Activated naive CD8-positive, alpha-beta T cell treated with anti-CD3 and anti-CD28 coated beads, Interleukin-2, amount 10 ng/mL, durations not matched to agents 7 days and 5 days (primary cell): ENCODE measurements at regions of chr11 and their contacts with region 1.

Region 1: DNA sequence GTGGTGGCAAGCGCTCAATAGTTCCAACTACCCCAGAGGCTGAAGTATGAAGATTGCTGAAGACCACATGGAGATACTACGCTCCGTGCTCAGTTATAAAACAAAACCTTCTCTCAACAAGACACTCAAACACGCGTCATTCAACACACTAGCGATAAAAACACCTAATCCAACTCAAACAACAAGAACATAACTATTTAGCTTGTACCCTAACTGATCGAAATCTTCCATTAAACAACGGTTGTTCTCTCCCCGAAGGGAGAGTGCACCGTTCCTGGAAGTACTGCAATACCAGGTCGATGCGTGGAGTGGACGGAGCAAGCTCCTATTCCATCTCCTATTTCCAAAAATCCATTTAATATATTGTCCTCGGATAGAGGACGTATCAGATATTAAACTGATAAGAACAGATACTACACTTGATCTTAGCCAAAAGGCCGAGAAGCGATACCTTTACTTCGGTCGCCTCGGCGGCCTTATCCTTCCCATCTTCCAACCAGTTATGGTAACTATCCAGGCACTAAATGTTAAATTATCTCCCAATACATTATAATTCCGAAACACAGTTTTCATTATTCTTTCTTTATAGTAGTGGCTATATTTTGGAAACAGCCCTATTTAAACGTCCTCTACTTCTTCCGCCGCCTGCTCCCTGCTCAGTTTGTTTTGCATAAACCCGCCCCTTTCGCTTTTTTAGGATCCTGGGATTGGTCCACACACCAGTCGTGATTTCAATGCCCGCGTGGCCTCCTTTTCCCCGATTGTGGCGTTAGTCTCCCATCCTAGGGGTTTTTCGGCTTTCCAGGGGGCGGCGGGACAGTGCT is 2.2 kb upstream of the WDR74 start:
- DNase-seq: peak; percentile 81
- ATAC-seq: peak; percentile 69
- H3K4me3 Mint-ChIP-seq: no peak overlapping the region
- H3K27ac Mint-ChIP-seq: no peak overlapping the region
- H3K4me1 Mint-ChIP-seq: peaks cover 20% of the 10 kb centered on the region
- H3K27me3 Mint-ChIP-seq: no peaks in the 10 kb centered on the region

Region 2: DNA sequence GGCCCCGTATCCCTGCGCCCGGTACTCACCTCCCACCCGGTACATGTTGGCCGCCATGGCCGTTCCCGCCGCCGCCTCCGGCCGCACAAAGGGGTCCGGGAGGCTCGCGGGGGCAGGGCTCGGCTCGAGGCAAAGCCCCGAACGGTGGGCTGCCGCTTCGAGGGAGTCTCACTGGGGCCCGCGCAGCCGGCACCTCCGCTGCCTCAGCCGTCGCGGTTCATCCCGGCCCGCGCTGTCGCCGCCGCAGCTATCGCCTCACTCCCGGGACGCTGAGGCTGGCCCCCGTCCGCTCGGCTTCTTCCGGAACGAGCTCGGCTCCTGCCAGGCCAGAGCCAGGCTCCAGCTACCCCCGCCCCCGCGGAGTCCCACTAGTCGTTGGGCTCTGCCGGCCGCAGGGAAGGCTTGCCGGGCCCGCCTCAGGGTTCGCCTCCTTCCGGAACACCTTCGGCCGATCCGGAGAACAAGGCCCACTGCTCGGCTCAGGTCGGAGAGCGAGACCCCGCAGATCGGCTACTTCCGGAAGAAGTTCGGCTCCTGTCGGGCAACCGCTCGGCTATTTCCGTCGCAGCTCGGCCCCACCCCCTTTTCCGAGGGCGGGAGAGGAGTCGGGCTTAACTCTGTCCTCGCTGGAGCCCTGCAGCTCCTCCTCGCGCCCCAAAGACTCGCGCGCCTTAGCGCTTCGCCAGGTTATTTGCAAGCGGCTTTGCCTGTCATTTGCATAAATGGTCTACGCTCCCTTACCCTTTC is 240.0 kb before region 1 on chr11 and contains the start of gene MTA2:
- POLR2A ChIA-PET with region 1: interaction called, 16 read pairs
- DNase-seq: peak; percentile 99
- ATAC-seq: peak; percentile 89
- H3K4me3 Mint-ChIP-seq: peak within 1 kb of the TSS; percentile 87
- H3K27ac Mint-ChIP-seq: peak within 1 kb of the TSS; percentile 88
- H3K4me1 Mint-ChIP-seq: peaks cover 34% of the 10 kb centered on the region
- H3K27me3 Mint-ChIP-seq: no peaks in the 10 kb centered on the region
- total RNA-seq, gene MTA2: 231 to 233 TPM

Region 3: GRCh38 chr11:62671575-62672389 is 169.8 kb before region 1 on chr11 and contains the starts of genes LBHD1 and UQCC3:
- POLR2A ChIA-PET with region 1: interaction called, 18 read pairs
- DNase-seq: peak; percentile 84
- ATAC-seq: peak; percentile 87
- H3K4me3 Mint-ChIP-seq: peak within 1 kb of the TSS; percentile 94
- H3K27ac Mint-ChIP-seq: peak within 1 kb of the TSS; percentile 91
- H3K4me1 Mint-ChIP-seq: peaks cover 35% of the 10 kb centered on the region
- H3K27me3 Mint-ChIP-seq: no peaks in the 10 kb centered on the region
- total RNA-seq, gene LBHD1: 23.5 to 23.6 TPM
- total RNA-seq, gene UQCC3: 6.7 to 6.8 TPM

Region 4: DNA sequence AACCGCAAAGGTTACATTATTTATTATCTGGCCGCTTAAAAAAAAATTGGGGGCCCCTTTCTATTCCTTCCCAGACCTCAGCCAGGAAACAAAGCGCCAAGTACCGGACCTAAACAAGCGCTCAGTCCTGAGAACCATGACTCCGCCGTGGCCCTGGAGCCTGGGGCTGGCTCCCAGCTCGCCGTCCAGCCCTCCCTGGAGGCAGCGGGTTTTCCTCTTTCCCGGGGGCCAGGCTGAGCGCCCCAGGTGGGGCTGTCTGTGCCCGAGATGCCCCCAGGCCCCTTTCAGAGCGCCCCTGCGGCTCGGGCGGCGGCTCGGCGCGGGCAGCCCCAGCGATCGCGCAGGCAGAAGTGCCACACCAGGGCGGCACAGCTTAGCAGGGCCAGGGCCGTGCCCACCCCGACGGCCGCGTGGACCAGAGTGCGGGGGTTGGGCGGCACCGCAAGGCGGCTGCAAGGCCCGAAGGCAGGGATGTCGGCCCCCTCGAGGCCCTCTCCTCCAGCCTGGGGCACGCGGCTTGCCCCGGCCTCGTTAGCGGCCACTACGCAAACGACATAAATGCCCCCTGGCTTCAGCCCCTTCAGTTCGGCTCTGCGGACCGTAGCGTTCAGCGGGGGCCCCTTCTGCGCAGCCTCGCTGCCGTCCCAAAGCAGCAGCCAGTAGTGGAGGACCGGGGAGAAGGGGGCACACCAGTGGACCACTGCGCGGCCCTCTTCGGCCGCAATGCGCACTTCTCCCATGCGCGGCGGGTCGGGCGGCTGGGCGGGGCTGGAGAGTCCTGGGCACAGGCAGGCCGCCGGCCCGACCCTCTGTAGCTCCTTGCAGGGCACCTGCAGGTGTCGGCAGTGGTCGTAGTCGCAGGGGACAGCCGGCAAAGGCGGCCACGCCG is 153.8 kb before region 1 on chr11:
- POLR2A ChIA-PET with region 1: no interaction called
- DNase-seq: no peak
- ATAC-seq: no peak
- H3K4me3 Mint-ChIP-seq: no peak overlapping the region
- H3K27ac Mint-ChIP-seq: no peak overlapping the region
- H3K4me1 Mint-ChIP-seq: no peaks in the 10 kb centered on the region
- H3K27me3 Mint-ChIP-seq: peaks cover 10% of the 10 kb centered on the region

Region 5: GRCh38 chr11:62753736-62754603 is 87.6 kb before region 1 on chr11 and contains the start of gene ZBTB3:
- POLR2A ChIA-PET with region 1: interaction called, 73 read pairs
- DNase-seq: peak; percentile 95
- ATAC-seq: peak; percentile 99
- H3K4me3 Mint-ChIP-seq: peak within 1 kb of the TSS; percentile 96
- H3K27ac Mint-ChIP-seq: peak within 1 kb of the TSS; percentile 98
- H3K4me1 Mint-ChIP-seq: peaks cover 26% of the 10 kb centered on the region
- H3K27me3 Mint-ChIP-seq: peaks cover 4% of the 10 kb centered on the region
- total RNA-seq, gene ZBTB3: 14.0 to 17.1 TPM

Region 6: GRCh38 chr11:62794201-62794775 is 47.3 kb before region 1 on chr11:
- POLR2A ChIA-PET with region 1: interaction called, 247 read pairs
- DNase-seq: no peak
- ATAC-seq: no peak
- H3K4me3 Mint-ChIP-seq: no peak overlapping the region
- H3K27ac Mint-ChIP-seq: no peak overlapping the region
- H3K4me1 Mint-ChIP-seq: peaks cover 29% of the 10 kb centered on the region
- H3K27me3 Mint-ChIP-seq: no peaks in the 10 kb centered on the region

Region 7: DNA sequence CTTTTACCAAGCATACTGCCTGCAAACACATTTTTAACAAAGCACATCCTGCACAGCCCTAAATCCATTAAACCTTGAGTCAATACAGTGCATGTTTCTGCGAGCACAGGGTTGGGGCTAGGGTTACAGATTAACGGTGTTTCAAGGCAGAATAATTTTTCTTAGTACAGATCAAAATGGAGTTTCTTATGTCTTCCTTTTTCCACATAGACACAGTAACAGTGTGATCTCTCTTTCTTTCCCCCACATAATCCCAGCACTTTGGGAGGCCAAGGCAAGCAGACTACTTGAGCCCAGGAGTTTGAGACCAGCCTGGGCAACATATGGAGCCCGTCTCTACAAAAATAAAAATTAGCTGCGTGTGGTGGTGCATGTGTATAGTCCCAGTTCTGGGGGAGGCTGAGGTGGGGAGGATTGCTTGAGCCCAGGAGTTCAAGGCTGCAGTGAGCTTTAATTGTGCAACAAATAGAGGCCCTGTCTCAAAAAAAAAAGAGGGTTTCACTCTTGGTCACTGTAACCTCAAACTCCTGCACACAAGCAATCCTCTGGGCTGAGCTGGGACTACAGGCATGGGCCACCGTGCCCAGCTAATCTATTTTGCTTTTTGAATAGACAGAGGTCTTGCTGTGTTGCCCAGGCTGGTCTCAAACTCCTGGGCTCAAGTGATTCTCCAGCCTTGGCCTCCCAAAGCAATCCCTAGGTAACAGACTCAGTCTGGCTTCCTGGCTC is 19.4 kb after region 1 on chr11:
- POLR2A ChIA-PET with region 1: interaction called, 429 read pairs
- DNase-seq: no peak
- ATAC-seq: no peak
- H3K4me3 Mint-ChIP-seq: no peak overlapping the region
- H3K27ac Mint-ChIP-seq: peak overlapping the region; percentile 63
- H3K4me1 Mint-ChIP-seq: peaks cover 32% of the 10 kb centered on the region
- H3K27me3 Mint-ChIP-seq: no peaks in the 10 kb centered on the region